ENCODE measurements at regions of chr15 and their contacts with region 1.

Region 1: GRCh38 chr15:81286621-81287121 is 37.3 kb downstream of the STARD5 start:
- H3K4me3 Mint-ChIP-seq: no peak overlapping the region
- H3K27ac Mint-ChIP-seq: peak overlapping the region; percentile 87
- H3K4me1 Mint-ChIP-seq: peaks cover 66% of the 10 kb centered on the region
- H3K27me3 Mint-ChIP-seq: no peaks in the 10 kb centered on the region

Region 2: DNA sequence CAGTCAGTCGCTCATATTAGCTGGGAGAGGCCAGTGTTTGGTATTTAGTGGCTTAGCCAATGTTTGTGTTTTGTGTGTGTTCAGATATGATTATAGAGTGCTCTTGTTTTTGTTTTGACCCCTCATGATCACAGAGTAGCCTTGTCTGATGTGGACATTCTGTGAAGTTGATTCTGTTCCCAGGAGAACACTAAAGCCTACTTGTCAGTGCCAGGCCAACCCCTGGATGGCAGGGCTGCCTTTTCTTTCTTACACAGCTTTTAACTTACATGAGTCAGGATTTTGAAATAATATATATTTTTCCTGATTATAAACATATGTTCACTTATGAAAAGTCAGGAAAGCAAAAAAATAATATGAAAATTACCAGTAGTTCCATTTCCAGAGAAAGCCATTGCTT is 140.7 kb before region 1 on chr15:
- intact Hi-C with region 1: no loop called
- H3K4me3 Mint-ChIP-seq: no peak overlapping the region
- H3K27ac Mint-ChIP-seq: no peak overlapping the region
- H3K4me1 Mint-ChIP-seq: peaks cover 5% of the 10 kb centered on the region
- H3K27me3 Mint-ChIP-seq: peaks cover 16% of the 10 kb centered on the region

Region 3: GRCh38 chr15:81323944-81324881 is 37.5 kb after region 1 on chr15 and contains the start of gene STARD5:
- intact Hi-C with region 1: loop called (anchors 5 kb)
- H3K4me3 Mint-ChIP-seq: peak within 1 kb of the TSS; percentile 84
- H3K27ac Mint-ChIP-seq: peak within 1 kb of the TSS; percentile 80
- H3K4me1 Mint-ChIP-seq: peaks cover 32% of the 10 kb centered on the region
- H3K27me3 Mint-ChIP-seq: peaks cover 6% of the 10 kb centered on the region

Region 4: DNA sequence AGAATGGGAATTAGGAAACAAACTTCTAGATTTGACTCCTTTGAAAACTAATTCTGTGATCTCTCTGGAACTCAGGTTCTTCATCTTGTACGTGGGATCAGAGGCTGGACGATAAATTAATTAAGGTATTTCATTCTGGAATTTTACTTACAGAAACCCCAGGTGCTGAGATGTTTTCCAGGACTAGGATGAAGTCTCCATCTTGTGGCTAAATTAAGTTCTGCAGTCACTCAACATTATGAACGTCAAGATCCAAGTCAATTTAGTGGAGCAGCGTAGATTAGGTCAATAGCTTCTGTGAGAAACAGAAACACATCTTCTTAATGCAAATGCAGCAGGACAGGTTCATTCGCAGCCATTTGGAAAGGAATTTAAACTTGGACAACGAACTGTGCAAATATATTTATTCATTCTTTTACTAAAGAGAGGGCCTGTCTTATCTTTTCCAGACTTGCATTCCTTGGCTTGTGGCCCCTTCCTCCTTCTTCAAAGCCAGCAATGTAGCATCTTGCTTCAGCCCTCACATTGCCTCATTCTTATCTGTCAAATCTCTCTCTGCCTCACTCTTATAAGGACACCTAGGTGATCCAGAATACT is 114.1 kb after region 1 on chr15:
- intact Hi-C with region 1: no loop called
- H3K4me3 Mint-ChIP-seq: no peak overlapping the region
- H3K27ac Mint-ChIP-seq: no peak overlapping the region
- H3K4me1 Mint-ChIP-seq: no peaks in the 10 kb centered on the region
- H3K27me3 Mint-ChIP-seq: peaks cover 1% of the 10 kb centered on the region

Measured in dendritic cell treated with granulocyte-macrophage colony-stimulating factor and Interleukin-4, amounts not matched to agents 40 ng/mL and 50 ng/mL, for 4 days (primary cell).